ENCODE measurements at regions of chr4 and their contacts with region 1.

Region 1: GRCh38 chr4:99816545-99817308 is at the start of gene DAPP1:
- DNase-seq: peak; percentile 59 to 83 (median 62)
- ATAC-seq: peak; percentile 82
- H3K4me3 ChIP-seq: no peak within 1 kb of the TSS
- H3K4me1 ChIP-seq: peaks cover 3% of the 10 kb centered on the region
- CTCF ChIP-seq: no peak
- total RNA-seq, gene DAPP1: 1.3 to 4.6 (median 1.7) TPM

Region 2: DNA sequence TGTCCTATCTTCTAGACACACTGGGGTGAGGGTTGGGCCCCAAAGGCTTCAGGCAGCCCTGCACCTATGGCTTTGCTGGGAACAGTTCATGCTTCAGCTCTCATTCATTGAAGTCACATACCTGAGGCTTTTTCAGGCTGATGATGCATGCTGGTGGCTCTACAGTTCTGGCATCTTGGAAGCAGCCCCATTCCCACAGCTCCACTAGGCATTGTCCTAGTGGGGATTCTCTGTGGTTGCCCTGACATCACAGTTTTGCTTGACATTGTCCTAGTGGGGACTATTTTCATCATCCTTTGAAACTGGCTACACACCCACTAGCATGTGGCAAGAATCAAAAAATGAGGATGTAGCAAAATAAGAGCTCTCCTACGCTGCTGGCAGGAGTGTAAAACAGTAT is 343.6 kb before region 1 on chr4:
- intact Hi-C with region 1: no loop called
- DNase-seq: no peak
- ATAC-seq: no peak
- H3K4me3 ChIP-seq: no peak overlapping the region
- H3K4me1 ChIP-seq: no peaks in the 10 kb centered on the region
- CTCF ChIP-seq: no peak

Region 3: GRCh38 chr4:99490286-99490685 is 326.4 kb before region 1 on chr4:
- intact Hi-C with region 1: no loop called
- DNase-seq: no peak
- ATAC-seq: no peak
- H3K4me3 ChIP-seq: no peak overlapping the region
- H3K4me1 ChIP-seq: no peaks in the 10 kb centered on the region
- CTCF ChIP-seq: no peak

Region 4: GRCh38 chr4:99894161-99894997 is 77.7 kb after region 1 on chr4 and contains the start of gene LAMTOR3:
- intact Hi-C with region 1: loop called in 1 of 2 experiments (anchors 10 kb)
- DNase-seq: peak; percentile 92 to 95 (median 94)
- ATAC-seq: peak; percentile 100
- H3K4me3 ChIP-seq: peak within 1 kb of the TSS; percentile 67
- H3K4me1 ChIP-seq: peaks cover 12% of the 10 kb centered on the region
- CTCF ChIP-seq: no peak
- total RNA-seq, gene LAMTOR3: 42.4 to 60.7 (median 59.2) TPM

Region 5: DNA sequence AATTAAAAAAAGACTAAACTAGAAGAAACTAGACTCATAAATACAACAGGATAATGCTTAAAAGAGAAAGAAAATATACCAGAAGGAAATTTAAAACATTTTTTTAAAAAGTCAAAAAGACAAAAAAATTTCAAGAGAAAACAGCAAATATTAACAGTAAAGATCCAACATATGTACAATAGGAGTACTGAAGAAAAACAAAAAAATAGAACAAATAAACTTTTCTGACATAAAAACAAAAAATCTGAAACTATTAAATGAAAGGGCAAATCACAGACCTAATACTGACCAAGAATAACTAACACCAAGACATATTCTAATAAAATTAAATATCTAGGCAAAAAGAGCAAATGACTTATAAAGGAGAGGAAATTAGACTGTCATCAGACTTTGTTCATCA is 118.2 kb after region 1 on chr4:
- intact Hi-C with region 1: no loop called
- DNase-seq: no peak
- ATAC-seq: no peak
- H3K4me3 ChIP-seq: no peak overlapping the region
- H3K4me1 ChIP-seq: no peaks in the 10 kb centered on the region
- CTCF ChIP-seq: no peak